ENCODE measurements at regions of chr2 and their contacts with region 1.

Region 1: DNA sequence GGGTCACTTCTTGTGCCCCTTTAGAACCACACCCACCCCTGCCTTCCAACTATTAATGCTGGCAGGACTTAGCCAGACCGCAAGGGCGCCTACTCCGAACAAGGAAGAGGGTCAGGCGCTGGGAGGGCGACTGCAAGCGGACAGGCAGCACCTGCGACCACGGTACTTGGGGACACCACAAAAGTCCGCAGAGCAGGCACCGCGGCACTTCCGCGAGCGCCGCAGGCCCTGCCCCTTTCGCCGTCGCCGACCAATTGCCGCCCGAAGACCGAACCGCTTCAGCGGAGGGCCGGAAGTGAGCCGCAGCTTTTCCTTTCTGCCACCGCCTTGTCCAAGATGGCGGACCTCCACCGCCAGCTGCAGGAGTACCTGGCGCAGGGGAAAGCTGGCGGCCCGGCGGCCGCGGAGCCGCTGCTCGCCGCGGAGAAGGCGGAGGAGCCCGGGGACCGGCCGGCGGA is at the start of gene SFT2D3:
- DNase-seq: peak; percentile 82 to 96 (median 88)
- ATAC-seq: peak; percentile 73
- H3K4me3 ChIP-seq: peak within 1 kb of the TSS; percentile 83
- H3K4me3 Mint-ChIP-seq: peak within 1 kb of the TSS; percentile 97
- H3K27ac ChIP-seq: peak within 1 kb of the TSS; percentile 82 to 94
- H3K27ac Mint-ChIP-seq: peak within 1 kb of the TSS; percentile 99
- H3K4me1 ChIP-seq: peaks cover 36% of the 10 kb centered on the region
- H3K4me1 Mint-ChIP-seq: peaks cover 50% of the 10 kb centered on the region
- H3K27me3 ChIP-seq: no peaks in the 10 kb centered on the region
- H3K27me3 Mint-ChIP-seq: no peaks in the 10 kb centered on the region
- CTCF ChIP-seq: no peak
- total RNA-seq, gene SFT2D3: 8.5 to 8.9 TPM

Region 2: DNA sequence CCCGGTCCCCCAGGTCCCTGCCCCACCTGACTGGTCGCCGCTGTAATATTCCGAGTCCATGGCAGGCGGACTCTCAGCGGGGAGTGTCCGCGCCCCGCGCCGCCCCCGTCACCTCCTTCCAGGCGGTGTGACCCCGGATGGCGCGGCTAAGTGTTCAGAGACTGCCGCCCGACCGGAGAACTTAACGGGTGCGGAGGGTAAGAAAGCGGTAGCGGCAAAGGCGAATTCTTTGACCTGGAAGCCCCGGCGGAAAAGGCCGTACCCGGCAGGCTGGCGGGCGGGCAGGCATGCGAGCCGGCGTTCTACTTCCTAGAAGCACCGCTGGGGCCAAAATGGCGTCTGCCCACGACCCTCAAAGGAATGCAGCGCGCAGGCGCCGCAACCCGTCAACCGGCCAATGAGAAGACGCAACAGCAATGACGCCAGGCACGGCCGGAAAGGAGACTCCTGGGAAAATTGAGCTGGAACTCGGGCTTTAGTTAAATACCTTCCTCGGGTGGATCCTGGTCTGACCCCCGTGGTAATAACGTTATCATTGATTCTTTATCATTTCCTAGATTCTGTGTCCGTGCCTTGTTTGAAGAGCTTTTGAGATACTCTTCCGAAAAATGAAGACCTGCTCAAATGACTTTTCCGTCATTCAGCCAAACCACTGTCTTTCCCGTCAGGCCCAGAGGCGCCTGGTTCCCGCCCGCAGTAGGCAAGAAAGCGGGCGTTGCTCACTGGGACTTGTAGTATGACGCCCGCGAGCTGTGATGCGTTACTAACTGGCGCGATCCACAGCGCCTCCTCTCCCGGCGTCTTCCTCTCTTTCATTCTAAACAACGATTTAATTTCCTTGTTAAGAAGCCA is 174.8 kb before region 1 on chr2 and contains the start of gene IWS1:
- CTCF ChIA-PET with region 1: no interaction called
- POLR2A ChIA-PET with region 1: interaction called, 31 read pairs
- intact Hi-C with region 1: loop called (anchors 2 to 5 kb)
- DNase-seq: peak; percentile 83 to 98 (median 89)
- ATAC-seq: peak; percentile 91
- H3K4me3 ChIP-seq: peak within 1 kb of the TSS; percentile 91
- H3K4me3 Mint-ChIP-seq: peak within 1 kb of the TSS; percentile 96
- H3K27ac ChIP-seq: peak within 1 kb of the TSS; percentile 90 to 95
- H3K27ac Mint-ChIP-seq: peak within 1 kb of the TSS; percentile 99
- H3K4me1 ChIP-seq: peaks cover 31% of the 10 kb centered on the region
- H3K4me1 Mint-ChIP-seq: peaks cover 40% of the 10 kb centered on the region
- H3K27me3 ChIP-seq: no peaks in the 10 kb centered on the region
- H3K27me3 Mint-ChIP-seq: no peaks in the 10 kb centered on the region
- CTCF ChIP-seq: no peak
- total RNA-seq, gene IWS1: 24.9 to 26.0 TPM

Region 3: GRCh38 chr2:127640082-127641072 is 60.8 kb before region 1 on chr2:
- CTCF ChIA-PET with region 1: interaction called, 3 read pairs
- POLR2A ChIA-PET with region 1: interaction called, 12 read pairs
- intact Hi-C with region 1: loop called (anchors 5 kb)
- DNase-seq: peak in 9 of 14 experiments; percentile 9 to 59 (median 33)
- ATAC-seq: peak; percentile 24
- H3K4me3 ChIP-seq: peak overlapping the region; percentile 63
- H3K4me3 Mint-ChIP-seq: peak overlapping the region; percentile 79
- H3K27ac ChIP-seq: peak overlapping the region; percentile 68 to 75
- H3K27ac Mint-ChIP-seq: peak overlapping the region; percentile 94
- H3K4me1 ChIP-seq: peaks cover 81% of the 10 kb centered on the region
- H3K4me1 Mint-ChIP-seq: peaks cover 86% of the 10 kb centered on the region
- H3K27me3 ChIP-seq: no peaks in the 10 kb centered on the region
- H3K27me3 Mint-ChIP-seq: no peaks in the 10 kb centered on the region
- CTCF ChIP-seq: peak; percentile 31

Region 4: GRCh38 chr2:127675331-127676261 is 25.6 kb before region 1 on chr2 and contains the start of gene LIMS2:
- CTCF ChIA-PET with region 1: no interaction called
- POLR2A ChIA-PET with region 1: interaction called, 10 read pairs
- intact Hi-C with region 1: no loop called
- DNase-seq: peak in 2 of 14 experiments; percentile 20 to 32
- ATAC-seq: no peak
- H3K4me3 ChIP-seq: peak within 1 kb of the TSS; percentile 6
- H3K4me3 Mint-ChIP-seq: peak within 1 kb of the TSS; percentile 81
- H3K27ac ChIP-seq: no peak within 1 kb of the TSS
- H3K27ac Mint-ChIP-seq: no peak within 1 kb of the TSS
- H3K4me1 ChIP-seq: peaks cover 15% of the 10 kb centered on the region
- H3K4me1 Mint-ChIP-seq: peaks cover 9% of the 10 kb centered on the region
- H3K27me3 ChIP-seq: peaks cover 41 to 42% of the 10 kb centered on the region in 2 experiments
- H3K27me3 Mint-ChIP-seq: peaks cover 68% of the 10 kb centered on the region
- CTCF ChIP-seq: no peak
- total RNA-seq, gene LIMS2: 6.1 to 7.0 TPM

Region 5: GRCh38 chr2:127718271-127718670 is 17.0 kb after region 1 on chr2:
- CTCF ChIA-PET with region 1: interaction called, 3 read pairs
- POLR2A ChIA-PET with region 1: interaction called, 15 read pairs
- intact Hi-C with region 1: no loop called
- DNase-seq: no peak
- ATAC-seq: no peak
- H3K4me3 ChIP-seq: no peak overlapping the region
- H3K4me3 Mint-ChIP-seq: no peak overlapping the region
- H3K27ac ChIP-seq: no peak overlapping the region
- H3K27ac Mint-ChIP-seq: no peak overlapping the region
- H3K4me1 ChIP-seq: no peaks in the 10 kb centered on the region
- H3K4me1 Mint-ChIP-seq: no peaks in the 10 kb centered on the region
- H3K27me3 ChIP-seq: no peaks in the 10 kb centered on the region
- H3K27me3 Mint-ChIP-seq: no peaks in the 10 kb centered on the region
- CTCF ChIP-seq: no peak

Region 6: DNA sequence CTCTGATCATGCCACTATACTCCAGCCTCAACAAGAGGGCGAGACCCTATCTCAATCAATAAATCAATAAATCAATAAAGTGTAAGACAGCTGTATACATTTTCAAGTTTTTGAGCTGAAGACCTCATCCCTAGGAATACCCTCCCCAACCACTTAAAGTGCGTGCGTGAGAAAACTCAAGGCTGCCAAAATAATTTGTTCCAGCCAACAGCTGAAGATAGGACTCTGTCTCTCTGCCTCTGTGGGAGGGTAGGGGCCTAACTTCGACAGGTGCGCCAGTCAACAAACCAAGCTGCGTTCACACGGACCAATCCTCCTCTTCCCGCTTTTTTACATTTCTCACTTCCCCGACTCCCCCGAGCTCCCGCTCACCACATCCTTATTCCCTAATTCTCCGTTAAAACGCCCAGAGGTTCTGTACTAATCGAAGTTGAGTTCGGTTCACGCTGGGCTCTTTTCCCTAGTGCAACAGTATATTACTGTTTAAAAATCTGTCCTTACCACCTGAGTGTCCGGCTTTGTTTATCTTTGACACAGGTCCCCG is 156.1 kb after region 1 on chr2:
- CTCF ChIA-PET with region 1: no interaction called
- POLR2A ChIA-PET with region 1: interaction called, 20 read pairs
- intact Hi-C with region 1: loop called in 1 of 2 experiments (anchors 5 kb)
- DNase-seq: peak in 5 of 14 experiments; percentile 8 to 43 (median 14)
- ATAC-seq: peak; percentile 5
- H3K4me3 ChIP-seq: peak overlapping the region; percentile 92
- H3K4me3 Mint-ChIP-seq: peak overlapping the region; percentile 88
- H3K27ac ChIP-seq: peak overlapping the region; percentile 65 to 70
- H3K27ac Mint-ChIP-seq: peak overlapping the region; percentile 67
- H3K4me1 ChIP-seq: peaks cover 42% of the 10 kb centered on the region
- H3K4me1 Mint-ChIP-seq: peaks cover 49% of the 10 kb centered on the region
- H3K27me3 ChIP-seq: no peaks in the 10 kb centered on the region
- H3K27me3 Mint-ChIP-seq: no peaks in the 10 kb centered on the region
- CTCF ChIP-seq: no peak

Region 7: DNA sequence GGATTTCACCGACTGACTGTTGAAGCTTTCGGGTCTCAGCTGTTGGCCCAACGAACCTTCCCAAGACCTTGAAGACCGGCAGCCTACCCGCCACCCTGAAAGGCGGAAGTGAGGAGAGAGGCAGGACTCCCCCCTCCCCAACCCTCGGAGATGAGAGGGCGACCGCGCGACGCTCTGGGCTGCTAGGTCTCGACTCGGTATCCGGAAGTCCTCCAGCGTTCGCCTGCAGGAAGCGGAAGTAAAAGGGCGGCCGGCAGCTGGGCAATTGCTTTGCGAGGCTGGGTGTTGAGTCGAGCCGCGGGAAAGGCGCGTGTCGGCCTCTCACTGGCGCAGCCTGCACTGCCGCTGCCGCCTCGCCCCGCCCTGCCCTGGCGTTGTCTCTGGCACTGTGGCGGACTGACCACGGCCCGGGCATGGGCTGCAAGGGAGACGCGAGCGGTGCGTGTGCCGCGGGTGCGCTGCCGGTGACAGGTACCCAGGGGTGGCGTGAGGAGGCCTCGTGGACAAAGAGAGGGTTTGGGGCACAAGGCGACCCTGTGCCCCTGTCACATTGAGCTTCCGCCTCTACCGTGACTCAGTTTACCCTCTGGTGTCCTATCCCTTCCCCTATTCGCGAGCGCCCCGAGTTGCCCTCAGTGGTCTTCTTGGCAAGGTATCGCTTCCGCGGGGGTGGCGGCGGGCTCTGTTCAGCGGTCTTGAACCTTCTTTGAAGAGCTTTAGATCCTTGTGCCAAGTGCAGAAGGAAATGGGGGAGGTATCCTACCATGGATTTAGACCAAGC is 389.9 kb after region 1 on chr2 and contains the start of gene UGGT1:
- CTCF ChIA-PET with region 1: interaction called, 3 read pairs
- POLR2A ChIA-PET with region 1: interaction called, 8 read pairs
- intact Hi-C with region 1: loop called in 1 of 2 experiments (anchors 5 kb)
- DNase-seq: peak; percentile 88 to 98 (median 91)
- ATAC-seq: peak; percentile 96
- H3K4me3 ChIP-seq: peak within 1 kb of the TSS; percentile 89
- H3K4me3 Mint-ChIP-seq: peak within 1 kb of the TSS; percentile 98
- H3K27ac ChIP-seq: peak within 1 kb of the TSS; percentile 75 to 82
- H3K27ac Mint-ChIP-seq: peak within 1 kb of the TSS; percentile 97
- H3K4me1 ChIP-seq: peaks cover 26% of the 10 kb centered on the region
- H3K4me1 Mint-ChIP-seq: peaks cover 53% of the 10 kb centered on the region
- H3K27me3 ChIP-seq: no peaks in the 10 kb centered on the region
- H3K27me3 Mint-ChIP-seq: no peaks in the 10 kb centered on the region
- CTCF ChIP-seq: no peak
- total RNA-seq, gene UGGT1: 23.5 to 28.4 TPM

Measured in CD4-positive, alpha-beta T cell (primary cell).